MCF 10A (cell line): ENCODE measurements at regions of chr5 and their contacts with region 1.

Region 1: GRCh38 chr5:96629774-96630173 is 32.4 kb upstream of the CAST start:
- DNase-seq: peak; percentile 95
- H3K4me3 Mint-ChIP-seq: peak overlapping the region; percentile 3
- H3K27ac Mint-ChIP-seq: peak overlapping the region; percentile 89
- H3K4me1 Mint-ChIP-seq: peaks cover 31% of the 10 kb centered on the region
- H3K27me3 Mint-ChIP-seq: no peaks in the 10 kb centered on the region
- CTCF ChIP-seq: no peak

Region 2: GRCh38 chr5:96651948-96652753 is 22.4 kb after region 1 on chr5:
- CTCF ChIA-PET with region 1: interaction called, 4 read pairs
- POLR2A ChIA-PET with region 1: interaction called, 43 read pairs
- intact Hi-C with region 1: no loop called
- DNase-seq: peak; percentile 39
- H3K4me3 Mint-ChIP-seq: no peak overlapping the region
- H3K27ac Mint-ChIP-seq: no peak overlapping the region
- H3K4me1 Mint-ChIP-seq: peaks cover 40% of the 10 kb centered on the region
- H3K27me3 Mint-ChIP-seq: no peaks in the 10 kb centered on the region
- CTCF ChIP-seq: peak; percentile 13

Region 3: GRCh38 chr5:96657087-96657665 is 27.4 kb after region 1 on chr5:
- CTCF ChIA-PET with region 1: interaction called, 4 read pairs
- POLR2A ChIA-PET with region 1: interaction called, 107 read pairs
- intact Hi-C with region 1: no loop called
- DNase-seq: peak; percentile 92
- H3K4me3 Mint-ChIP-seq: peak overlapping the region; percentile 2
- H3K27ac Mint-ChIP-seq: peak overlapping the region; percentile 69
- H3K4me1 Mint-ChIP-seq: peaks cover 42% of the 10 kb centered on the region
- H3K27me3 Mint-ChIP-seq: no peaks in the 10 kb centered on the region
- CTCF ChIP-seq: no peak